Activated CD8-positive, alpha-beta T cell treated with anti-CD3 and anti-CD28 coated beads, Interleukin-2, amount 10 ng/mL, durations not matched to agents 7 days and 5 days (primary cell): ENCODE measurements at regions of chr1 and their contacts with region 1.

Region 1: GRCh38 chr1:165768513-165769394 is at the start of gene TMCO1:
- DNase-seq: peak; percentile 97
- ATAC-seq: peak; percentile 98
- H3K4me3 Mint-ChIP-seq: peak within 1 kb of the TSS; percentile 99
- H3K27ac Mint-ChIP-seq: peak within 1 kb of the TSS; percentile 100
- H3K4me1 Mint-ChIP-seq: peaks cover 47% of the 10 kb centered on the region
- H3K27me3 Mint-ChIP-seq: no peaks in the 10 kb centered on the region
- total RNA-seq, gene TMCO1: 89.0 to 90.1 TPM

Region 2: GRCh38 chr1:165630629-165631341 is 138.0 kb before region 1 on chr1 and contains the start of gene MGST3:
- CTCF ChIA-PET with region 1: no interaction called
- POLR2A ChIA-PET with region 1: interaction called, 10 read pairs
- DNase-seq: peak; percentile 91
- ATAC-seq: peak; percentile 97
- H3K4me3 Mint-ChIP-seq: no peak within 1 kb of the TSS
- H3K27ac Mint-ChIP-seq: peak within 1 kb of the TSS; percentile 58
- H3K4me1 Mint-ChIP-seq: peaks cover 7% of the 10 kb centered on the region
- H3K27me3 Mint-ChIP-seq: peaks cover 10% of the 10 kb centered on the region
- total RNA-seq, gene MGST3: 30.9 to 33.0 TPM

Region 3: GRCh38 chr1:165679282-165680036 is 89.3 kb before region 1 on chr1:
- CTCF ChIA-PET with region 1: no interaction called
- POLR2A ChIA-PET with region 1: no interaction called
- DNase-seq: no peak
- ATAC-seq: no peak
- H3K4me3 Mint-ChIP-seq: no peak overlapping the region
- H3K27ac Mint-ChIP-seq: no peak overlapping the region
- H3K4me1 Mint-ChIP-seq: peaks cover 19% of the 10 kb centered on the region
- H3K27me3 Mint-ChIP-seq: no peaks in the 10 kb centered on the region

Region 4: GRCh38 chr1:165697881-165698760 is 70.6 kb before region 1 on chr1 and contains the start of gene ALDH9A1:
- CTCF ChIA-PET with region 1: no interaction called
- POLR2A ChIA-PET with region 1: interaction called, 19 read pairs
- DNase-seq: peak; percentile 91
- ATAC-seq: peak; percentile 93
- H3K4me3 Mint-ChIP-seq: peak within 1 kb of the TSS; percentile 100
- H3K27ac Mint-ChIP-seq: peak within 1 kb of the TSS; percentile 100
- H3K4me1 Mint-ChIP-seq: peaks cover 31% of the 10 kb centered on the region
- H3K27me3 Mint-ChIP-seq: peaks cover 2% of the 10 kb centered on the region
- total RNA-seq, gene ALDH9A1: 42.7 to 48.2 TPM

Region 5: DNA sequence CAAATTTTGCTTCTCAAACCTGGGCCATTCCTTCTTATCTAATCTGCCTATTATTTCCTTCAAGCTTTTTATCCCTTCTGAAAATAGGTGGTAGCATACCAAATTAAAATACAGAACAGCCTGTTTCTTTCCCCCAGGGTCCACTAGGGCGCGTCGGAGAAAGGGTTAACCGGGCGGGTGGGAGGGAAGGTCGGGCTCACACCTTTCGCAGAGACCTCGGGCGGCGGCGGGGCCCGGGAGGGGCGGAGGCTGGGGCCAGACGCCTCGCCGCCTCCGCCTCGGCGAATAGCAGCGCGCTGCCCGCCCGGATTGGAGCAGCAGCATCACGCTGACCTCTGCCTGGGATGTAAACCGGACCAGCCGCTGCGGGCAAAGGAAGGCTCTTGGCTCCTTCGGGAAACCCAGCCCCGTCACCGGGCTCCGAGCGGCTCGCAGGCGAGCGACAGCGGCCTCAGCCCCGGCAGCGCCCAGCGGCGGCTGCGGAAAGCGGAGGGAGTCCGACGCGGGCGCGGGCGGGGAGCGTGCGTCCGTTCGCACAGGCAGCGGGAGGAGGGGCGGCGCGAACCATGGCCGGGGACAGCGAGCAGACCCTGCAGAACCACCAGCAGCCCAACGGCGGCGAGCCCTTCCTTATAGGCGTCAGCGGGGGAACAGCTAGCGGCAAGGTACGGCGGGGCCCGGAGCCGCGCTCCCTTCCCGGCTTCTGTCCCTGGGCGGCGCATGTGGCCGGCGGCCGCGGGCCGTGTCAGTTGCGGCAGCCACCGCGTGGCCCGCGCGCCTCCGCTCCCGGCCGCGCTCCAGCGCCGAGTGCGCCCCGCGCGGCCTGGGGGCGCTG is 58.7 kb after region 1 on chr1 and contains the start of gene UCK2:
- CTCF ChIA-PET with region 1: interaction called, 7 read pairs
- POLR2A ChIA-PET with region 1: interaction called, 25 read pairs
- DNase-seq: peak; percentile 63
- ATAC-seq: peak; percentile 78
- H3K4me3 Mint-ChIP-seq: peak within 1 kb of the TSS; percentile 88
- H3K27ac Mint-ChIP-seq: peak within 1 kb of the TSS; percentile 88
- H3K4me1 Mint-ChIP-seq: peaks cover 18% of the 10 kb centered on the region
- H3K27me3 Mint-ChIP-seq: peaks cover 10% of the 10 kb centered on the region
- total RNA-seq, gene UCK2: 28.4 to 32.4 TPM

Region 6: GRCh38 chr1:165871311-165872067 is 102.7 kb after region 1 on chr1:
- CTCF ChIA-PET with region 1: interaction called, 16 read pairs
- POLR2A ChIA-PET with region 1: interaction called, 9 read pairs
- DNase-seq: peak; percentile 82
- ATAC-seq: peak; percentile 94
- H3K4me3 Mint-ChIP-seq: peak overlapping the region; percentile 48
- H3K27ac Mint-ChIP-seq: peak overlapping the region; percentile 64
- H3K4me1 Mint-ChIP-seq: peaks cover 48% of the 10 kb centered on the region
- H3K27me3 Mint-ChIP-seq: peaks cover 6% of the 10 kb centered on the region